AG04449 (cell line): ENCODE measurements at regions of chr5 and their contacts with region 1.

Region 1: DNA sequence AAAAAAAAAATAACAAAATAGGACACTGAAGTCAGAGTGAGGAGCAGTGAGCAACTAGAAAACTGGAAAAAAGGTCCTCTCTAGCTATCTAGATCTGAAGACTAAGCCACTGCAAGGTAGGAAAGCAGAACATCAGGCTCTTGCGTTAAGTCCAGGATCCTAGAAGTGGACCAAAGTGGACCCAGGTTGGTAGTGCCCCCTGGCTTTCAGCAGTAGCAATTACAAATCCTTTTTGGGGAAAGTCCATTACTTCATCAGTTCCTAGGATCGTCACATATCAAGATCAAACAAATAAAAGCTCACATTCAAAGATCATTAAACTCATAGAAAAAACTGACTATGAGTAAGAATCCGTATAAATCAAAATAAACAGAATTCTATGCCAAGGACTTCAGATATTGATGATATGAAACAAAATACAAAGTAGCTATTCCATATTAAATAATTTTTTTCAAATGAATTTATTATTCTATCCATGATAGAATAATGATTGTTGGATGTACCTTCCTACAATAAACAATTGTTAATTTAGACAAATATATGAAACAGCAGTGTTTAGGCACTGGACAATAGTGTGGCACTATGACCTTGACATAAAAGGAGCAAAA is 6.5 kb upstream of the RICTOR start:
- DNase-seq: no peak
- H3K4me3 ChIP-seq: no peak overlapping the region
- CTCF ChIP-seq: peak; percentile 62

Region 2: DNA sequence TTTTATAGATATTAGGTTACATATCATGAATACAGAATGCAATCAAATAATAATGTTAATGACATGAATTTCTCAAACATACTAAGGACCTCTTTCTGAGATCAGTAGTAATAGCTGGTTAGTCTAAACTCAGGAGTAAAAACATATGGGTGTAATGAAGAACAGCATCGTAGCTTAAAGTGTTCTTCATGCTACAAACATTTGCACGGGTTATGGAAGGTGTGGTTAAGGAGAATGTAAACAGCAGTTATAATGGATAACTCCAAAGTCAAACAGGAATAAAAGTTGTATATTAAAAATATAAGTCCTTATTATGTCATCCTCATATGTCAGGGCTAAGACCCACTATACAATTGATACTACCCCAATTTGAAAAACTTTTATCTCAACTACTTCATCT is 119.0 kb before region 1 on chr5:
- CTCF ChIA-PET with region 1: interaction called, 19 read pairs
- POLR2A ChIA-PET with region 1: no interaction called
- DNase-seq: no peak
- H3K4me3 ChIP-seq: no peak overlapping the region
- CTCF ChIP-seq: no peak

Region 3: GRCh38 chr5:39005566-39006232 is 75.0 kb before region 1 on chr5:
- CTCF ChIA-PET with region 1: interaction called, 18 read pairs
- POLR2A ChIA-PET with region 1: no interaction called
- DNase-seq: no peak
- H3K4me3 ChIP-seq: no peak overlapping the region
- CTCF ChIP-seq: peak; percentile 11

Region 4: DNA sequence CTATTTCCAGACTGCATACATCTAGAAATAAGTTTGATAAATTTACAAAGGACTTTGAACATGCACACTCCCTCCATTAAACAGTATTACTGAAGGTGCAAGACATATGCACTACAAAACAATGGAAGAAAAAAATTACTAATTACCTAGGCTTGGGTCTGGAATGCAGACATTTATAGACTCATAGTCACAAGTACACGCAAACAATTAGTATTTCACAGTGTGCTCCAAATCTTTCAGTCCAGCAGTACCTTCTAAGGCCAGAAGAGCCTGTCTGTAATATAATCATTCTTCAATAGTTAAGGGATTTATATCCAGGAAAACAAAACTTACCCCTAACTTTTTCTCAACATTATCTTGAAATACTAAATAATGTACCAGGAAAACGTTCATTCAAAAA is 17.7 kb before region 1 on chr5:
- CTCF ChIA-PET with region 1: interaction called, 12 read pairs
- POLR2A ChIA-PET with region 1: no interaction called
- DNase-seq: no peak
- H3K4me3 ChIP-seq: no peak overlapping the region
- CTCF ChIP-seq: no peak

Region 5: DNA sequence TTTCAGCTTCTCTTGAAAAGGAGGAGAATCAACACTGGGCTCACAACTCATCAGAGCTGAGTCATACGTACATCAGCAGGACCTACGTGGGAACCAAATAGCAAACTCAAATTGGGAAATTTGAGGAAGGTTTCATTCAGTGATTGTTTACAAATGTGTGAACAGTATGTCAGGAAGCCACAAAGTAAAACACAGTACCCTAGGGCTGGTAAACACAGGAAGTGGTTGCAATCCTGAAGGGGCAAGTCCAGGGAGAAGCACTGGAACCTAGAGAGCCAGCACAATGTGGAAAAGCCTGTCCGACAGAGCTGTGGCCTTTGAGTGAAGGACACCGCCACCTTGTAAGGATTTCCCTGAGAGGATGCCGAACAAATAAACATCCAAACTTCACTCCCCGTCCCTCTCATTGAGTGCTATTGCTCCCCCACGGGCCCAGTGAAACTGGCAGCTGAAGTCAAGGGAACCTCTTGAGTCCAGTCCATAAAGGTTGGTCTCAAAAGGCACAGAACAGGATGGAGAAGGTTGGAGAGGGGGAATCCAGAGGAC is 20.2 kb after region 1 on chr5:
- CTCF ChIA-PET with region 1: interaction called, 61 read pairs
- POLR2A ChIA-PET with region 1: no interaction called
- DNase-seq: peak; percentile 95
- H3K4me3 ChIP-seq: no peak overlapping the region
- CTCF ChIP-seq: no peak

Region 6: GRCh38 chr5:39399135-39400036 is 318.7 kb after region 1 on chr5:
- CTCF ChIA-PET with region 1: no interaction called
- POLR2A ChIA-PET with region 1: no interaction called
- DNase-seq: peak; percentile 94
- H3K4me3 ChIP-seq: no peak overlapping the region
- CTCF ChIP-seq: no peak